ENCODE measurements at regions of chr19 and their contacts with region 1.

Region 1: GRCh38 chr19:43555185-43555770 is 20.0 kb downstream of the XRCC1 start:
- DNase-seq: no peak
- ATAC-seq: peak; percentile 94
- H3K4me3 ChIP-seq: no peak overlapping the region
- H3K27ac ChIP-seq: no peak overlapping the region
- H3K4me1 ChIP-seq: no peaks in the 10 kb centered on the region
- H3K27me3 ChIP-seq: no peaks in the 10 kb centered on the region
- CTCF ChIP-seq: peak; percentile 86 to 95 (median 88)
- EP300 ChIP-seq: no peak
- POLR2A ChIP-seq: no peak
- RAD21 ChIP-seq: peak; percentile 75

Region 2: DNA sequence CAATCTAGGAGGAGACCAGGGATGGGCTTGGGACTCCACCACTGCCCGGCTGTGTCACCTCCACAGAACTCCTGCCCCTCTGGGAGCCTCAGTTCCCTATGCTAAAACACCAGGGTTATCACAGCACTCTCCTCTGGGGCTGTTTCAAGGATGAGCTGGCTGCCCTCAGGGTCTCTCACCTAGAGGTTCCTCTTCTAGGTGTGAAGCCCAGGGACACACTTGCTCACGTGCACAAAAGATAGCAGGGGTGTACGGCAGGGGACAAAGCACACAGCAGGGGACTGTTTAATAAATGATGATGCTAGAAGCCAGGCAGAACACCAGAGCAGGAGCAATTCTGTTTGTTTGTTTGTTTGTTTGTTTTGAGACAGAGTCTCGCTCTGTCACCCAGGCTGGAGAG is 73.1 kb before region 1 on chr19:
- CTCF ChIA-PET with region 1: no interaction called
- POLR2A ChIA-PET with region 1: no interaction called
- RAD21 ChIA-PET with region 1: no interaction called
- SMC1A ChIA-PET with region 1: no interaction called
- in situ Hi-C with region 1: no loop called
- intact Hi-C with region 1: no loop called
- DNase-seq: no peak
- ATAC-seq: no peak
- H3K4me3 ChIP-seq: no peak overlapping the region
- H3K27ac ChIP-seq: no peak overlapping the region
- H3K4me1 ChIP-seq: no peaks in the 10 kb centered on the region
- H3K27me3 ChIP-seq: no peaks in the 10 kb centered on the region
- CTCF ChIP-seq: no peak
- EP300 ChIP-seq: no peak
- POLR2A ChIP-seq: no peak
- RAD21 ChIP-seq: no peak

Region 3: GRCh38 chr19:43526884-43527859 is 28.1 kb before region 1 on chr19 and contains the start of gene ETHE1:
- CTCF ChIA-PET with region 1: interaction called, 24 read pairs
- POLR2A ChIA-PET with region 1: interaction called, 10 read pairs
- RAD21 ChIA-PET with region 1: interaction called, 4 read pairs
- SMC1A ChIA-PET with region 1: interaction called, 9 read pairs
- in situ Hi-C with region 1: no loop called
- intact Hi-C with region 1: no loop called
- DNase-seq: no peak
- ATAC-seq: peak; percentile 95
- H3K4me3 ChIP-seq: peak within 1 kb of the TSS; percentile 91
- H3K27ac ChIP-seq: peak within 1 kb of the TSS; percentile 65
- H3K4me1 ChIP-seq: peaks cover 3% of the 10 kb centered on the region; the same call in 1 of the 2 replicates
- H3K27me3 ChIP-seq: no peaks in the 10 kb centered on the region
- CTCF ChIP-seq: no peak
- EP300 ChIP-seq: no peak
- POLR2A ChIP-seq: peak; percentile 87
- RAD21 ChIP-seq: no peak
- polyA plus RNA-seq, gene ETHE1: 22.1 to 40.7 TPM

Region 4: DNA sequence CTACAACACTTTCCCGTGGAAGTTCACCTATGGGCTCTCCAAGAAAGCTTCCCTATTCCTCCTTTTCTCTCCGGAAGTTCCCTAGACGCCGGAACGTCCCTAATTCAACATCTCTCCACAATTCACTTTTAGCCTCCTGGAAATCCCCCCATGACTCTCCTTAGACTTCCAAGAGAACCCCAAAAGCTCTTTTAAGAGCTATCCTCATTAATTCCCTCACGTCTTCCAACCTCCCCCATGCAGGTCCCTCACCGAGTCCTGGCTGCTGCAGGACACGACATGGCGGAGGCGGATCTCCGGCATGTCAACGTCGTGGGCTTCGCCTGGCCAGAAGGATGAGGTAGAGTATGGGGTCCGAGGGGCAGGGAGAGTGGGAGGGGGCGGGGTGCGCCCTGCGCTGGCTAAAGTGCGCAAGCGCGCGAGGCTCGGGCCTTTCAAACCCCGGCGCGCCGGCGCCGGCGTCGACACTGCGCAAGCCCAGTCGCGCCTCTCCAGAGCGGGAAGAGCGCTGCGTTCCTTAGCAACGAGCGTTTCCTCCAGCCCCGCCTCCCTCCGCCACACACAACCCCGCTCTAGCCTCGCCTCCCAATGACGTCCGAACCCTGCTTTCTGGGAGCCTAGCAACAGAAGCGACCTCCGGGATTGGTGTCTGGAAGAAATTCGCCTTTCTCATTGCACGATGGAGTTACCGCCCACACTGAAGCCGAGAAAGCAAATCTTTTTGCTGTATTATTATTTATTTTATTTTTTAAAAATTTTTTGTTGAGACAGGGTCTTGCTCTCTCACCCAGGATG is 20.1 kb after region 1 on chr19 and contains the starts of genes PINLYP and XRCC1:
- CTCF ChIA-PET with region 1: interaction called, 99 read pairs
- POLR2A ChIA-PET with region 1: no interaction called
- RAD21 ChIA-PET with region 1: interaction called, 6 read pairs
- SMC1A ChIA-PET with region 1: interaction called, 8 read pairs
- in situ Hi-C with region 1: no loop called
- intact Hi-C with region 1: no loop called
- DNase-seq: peak; percentile 93
- ATAC-seq: peak; percentile 99
- H3K4me3 ChIP-seq: peak within 1 kb of the TSS; percentile 95
- H3K27ac ChIP-seq: peak within 1 kb of the TSS; percentile 78
- H3K4me1 ChIP-seq: peaks cover 5% of the 10 kb centered on the region
- H3K27me3 ChIP-seq: no peaks in the 10 kb centered on the region
- CTCF ChIP-seq: no peak
- EP300 ChIP-seq: no peak
- POLR2A ChIP-seq: peak; percentile 72
- RAD21 ChIP-seq: no peak
- polyA plus RNA-seq, gene PINLYP: 23.0 to 26.9 TPM
- polyA plus RNA-seq, gene XRCC1: 2.0 to 7.5 TPM

Region 5: GRCh38 chr19:43589678-43590077 is 34.4 kb after region 1 on chr19:
- CTCF ChIA-PET with region 1: interaction called, 169 read pairs
- POLR2A ChIA-PET with region 1: interaction called, 3 read pairs
- RAD21 ChIA-PET with region 1: interaction called, 92 read pairs
- SMC1A ChIA-PET with region 1: interaction called, 59 read pairs
- in situ Hi-C with region 1: no loop called
- intact Hi-C with region 1: loop called (anchors 1 kb)
- DNase-seq: no peak
- ATAC-seq: peak; percentile 22; the same call in 1 of the 3 replicates
- H3K4me3 ChIP-seq: no peak overlapping the region
- H3K27ac ChIP-seq: no peak overlapping the region
- H3K4me1 ChIP-seq: no peaks in the 10 kb centered on the region
- H3K27me3 ChIP-seq: no peaks in the 10 kb centered on the region
- CTCF ChIP-seq: no peak
- EP300 ChIP-seq: no peak
- POLR2A ChIP-seq: no peak
- RAD21 ChIP-seq: no peak

Region 6: GRCh38 chr19:43809762-43810696 is 254.8 kb after region 1 on chr19:
- CTCF ChIA-PET with region 1: interaction called, 15 read pairs
- POLR2A ChIA-PET with region 1: no interaction called
- RAD21 ChIA-PET with region 1: interaction called, 12 read pairs
- SMC1A ChIA-PET with region 1: interaction called, 8 read pairs
- in situ Hi-C with region 1: no loop called
- intact Hi-C with region 1: no loop called
- DNase-seq: peak; percentile 24
- ATAC-seq: peak; percentile 87
- H3K4me3 ChIP-seq: no peak overlapping the region
- H3K27ac ChIP-seq: no peak overlapping the region
- H3K4me1 ChIP-seq: no peaks in the 10 kb centered on the region
- H3K27me3 ChIP-seq: no peaks in the 10 kb centered on the region
- CTCF ChIP-seq: peak; percentile 36 to 76 (median 54); a peak in 4 of 6 replicates
- EP300 ChIP-seq: no peak
- POLR2A ChIP-seq: no peak
- RAD21 ChIP-seq: peak; percentile 78

Measured in GM12878 (cell line).